Activated CD4-positive, alpha-beta memory T cell treated with anti-CD3 and anti-CD28 coated beads, Interleukin-2, amount 10 ng/mL, durations not matched to agents 7 days and 5 days (primary cell): ENCODE measurements at regions of chr9 and their contacts with region 1.

Region 1: DNA sequence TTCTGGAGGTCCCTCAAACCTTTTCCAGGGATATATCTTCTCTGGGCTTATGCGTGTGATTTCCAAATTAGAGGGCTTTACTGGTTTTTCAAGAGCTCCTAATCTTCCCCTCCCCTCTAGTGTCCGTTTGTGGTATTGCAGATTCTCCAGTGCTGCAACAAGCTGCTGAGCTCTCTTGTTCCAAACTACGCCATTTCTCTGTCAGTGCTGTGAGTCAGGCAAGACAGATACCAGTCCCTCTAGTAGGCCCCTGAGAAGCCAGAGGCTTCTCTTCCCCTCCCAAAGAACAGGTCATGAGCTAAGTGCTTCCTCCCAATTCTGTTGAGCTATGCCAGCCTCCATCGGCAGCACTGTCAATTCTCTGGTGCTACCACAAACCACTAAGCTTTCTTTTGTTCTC is 149.5 kb downstream of the FANCC start:
- DNase-seq: peak; percentile 69
- H3K4me3 Mint-ChIP-seq: no peak overlapping the region
- H3K27ac Mint-ChIP-seq: peak overlapping the region; percentile 17
- H3K4me1 Mint-ChIP-seq: peaks cover 34% of the 10 kb centered on the region
- H3K27me3 Mint-ChIP-seq: no peaks in the 10 kb centered on the region

Region 2: GRCh38 chr9:94681508-94681907 is 486.5 kb before region 1 on chr9:
- CTCF ChIA-PET with region 1: interaction called, 16 read pairs
- POLR2A ChIA-PET with region 1: interaction called, 3 read pairs
- DNase-seq: peak; percentile 60
- H3K4me3 Mint-ChIP-seq: no peak overlapping the region
- H3K27ac Mint-ChIP-seq: no peak overlapping the region
- H3K4me1 Mint-ChIP-seq: no peaks in the 10 kb centered on the region
- H3K27me3 Mint-ChIP-seq: peaks cover 44% of the 10 kb centered on the region

Region 3: DNA sequence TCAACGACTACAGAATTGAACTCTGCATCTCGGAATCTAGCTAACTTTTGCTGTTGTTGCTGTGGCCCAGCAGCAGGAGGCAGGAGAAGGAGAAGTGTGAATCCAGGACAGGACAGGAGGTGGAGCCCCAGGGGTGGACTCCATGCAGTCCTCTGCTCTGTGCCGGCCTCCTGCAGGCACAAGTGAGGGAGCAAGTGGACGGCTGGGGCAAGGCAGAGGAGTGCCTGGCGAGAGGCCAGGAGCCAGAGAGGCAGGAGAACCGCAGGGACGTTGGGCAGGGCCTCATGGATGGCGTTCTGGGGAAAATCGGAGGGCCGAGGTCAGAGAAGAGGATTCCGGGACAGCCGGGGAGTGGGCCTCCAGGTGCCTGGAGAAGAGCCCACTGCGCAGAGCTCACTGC is 64.6 kb before region 1 on chr9:
- CTCF ChIA-PET with region 1: no interaction called
- POLR2A ChIA-PET with region 1: no interaction called
- DNase-seq: no peak
- H3K4me3 Mint-ChIP-seq: no peak overlapping the region
- H3K27ac Mint-ChIP-seq: no peak overlapping the region
- H3K4me1 Mint-ChIP-seq: no peaks in the 10 kb centered on the region
- H3K27me3 Mint-ChIP-seq: no peaks in the 10 kb centered on the region

Region 4: DNA sequence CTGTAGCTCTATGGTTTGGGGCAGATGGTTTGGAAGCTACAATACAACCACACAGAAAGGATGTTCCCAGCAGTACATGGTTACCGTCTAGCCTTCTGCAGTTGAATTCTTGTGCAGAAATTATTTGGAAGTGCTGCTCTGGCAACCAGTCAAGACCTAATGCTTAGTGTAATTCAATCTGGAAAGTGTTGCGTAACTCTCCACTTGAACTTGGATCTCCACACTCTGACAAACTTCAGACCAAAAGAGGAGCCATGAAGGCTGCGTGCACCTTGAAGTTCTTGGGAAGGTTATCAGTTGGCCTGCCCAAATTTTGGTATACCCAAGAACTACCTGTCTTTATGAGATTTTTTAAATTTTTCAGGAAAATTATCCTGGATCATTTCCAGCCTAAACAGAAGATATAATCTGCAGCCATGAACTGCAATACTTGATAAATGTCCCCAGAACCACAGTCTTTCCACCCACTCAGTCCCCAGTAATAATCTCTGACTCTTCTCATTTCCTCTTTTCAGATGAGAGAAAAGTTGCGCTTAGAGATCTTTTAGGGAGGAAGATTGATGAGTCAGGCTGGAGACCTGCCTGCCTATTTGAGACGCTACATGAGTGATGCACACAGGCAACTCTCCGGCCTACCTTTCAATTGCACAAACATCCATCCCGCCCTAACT is 10.4 kb before region 1 on chr9:
- CTCF ChIA-PET with region 1: interaction called, 15 read pairs
- POLR2A ChIA-PET with region 1: no interaction called
- DNase-seq: no peak
- H3K4me3 Mint-ChIP-seq: no peak overlapping the region
- H3K27ac Mint-ChIP-seq: no peak overlapping the region
- H3K4me1 Mint-ChIP-seq: no peaks in the 10 kb centered on the region
- H3K27me3 Mint-ChIP-seq: no peaks in the 10 kb centered on the region

Region 5: GRCh38 chr9:95181226-95181818 is 13.3 kb after region 1 on chr9:
- CTCF ChIA-PET with region 1: interaction called, 42 read pairs
- POLR2A ChIA-PET with region 1: no interaction called
- DNase-seq: no peak
- H3K4me3 Mint-ChIP-seq: no peak overlapping the region
- H3K27ac Mint-ChIP-seq: no peak overlapping the region
- H3K4me1 Mint-ChIP-seq: no peaks in the 10 kb centered on the region
- H3K27me3 Mint-ChIP-seq: no peaks in the 10 kb centered on the region

Region 6: GRCh38 chr9:95302479-95302878 is 134.5 kb after region 1 on chr9:
- CTCF ChIA-PET with region 1: no interaction called
- POLR2A ChIA-PET with region 1: no interaction called
- DNase-seq: no peak
- H3K4me3 Mint-ChIP-seq: no peak overlapping the region
- H3K27ac Mint-ChIP-seq: no peak overlapping the region
- H3K4me1 Mint-ChIP-seq: peaks cover 13% of the 10 kb centered on the region
- H3K27me3 Mint-ChIP-seq: no peaks in the 10 kb centered on the region